Thyroid gland (tissue), 4 donors: ENCODE measurements at regions of chr2 and their contacts with region 1.

Region 1: DNA sequence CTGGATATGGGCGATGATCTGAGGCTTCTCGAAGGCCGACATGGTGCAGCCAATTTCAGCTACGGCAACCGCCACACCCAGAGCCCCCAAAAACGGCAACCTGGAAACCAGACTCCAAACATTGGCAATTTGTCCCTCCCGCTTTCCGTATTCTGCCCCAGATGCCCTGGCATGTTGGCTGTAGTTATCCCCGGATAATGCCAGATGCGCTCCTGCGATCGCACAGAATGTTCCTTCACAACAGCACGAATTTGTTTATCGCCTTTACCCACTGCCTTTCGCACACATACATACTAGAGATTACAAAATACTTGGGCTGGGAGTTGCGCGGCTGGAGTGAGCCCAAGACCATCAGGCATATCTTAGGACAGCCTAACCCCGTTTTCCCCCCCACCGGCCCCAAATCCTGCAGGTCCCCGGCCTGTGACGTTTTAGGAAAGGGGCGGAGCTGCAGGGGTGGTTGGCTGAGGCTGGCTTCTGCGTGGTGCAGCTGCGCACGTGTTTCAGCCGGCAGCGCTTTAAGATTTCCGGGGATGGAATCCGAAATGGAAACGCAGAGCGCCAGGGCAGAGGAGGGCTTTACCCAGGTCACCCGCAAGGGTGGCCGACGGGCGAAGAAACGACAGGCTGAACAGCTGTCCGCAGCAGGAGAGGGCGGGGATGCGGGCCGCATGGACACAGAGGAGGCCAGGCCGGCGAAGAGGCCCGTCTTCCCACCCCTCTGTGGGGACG is at the start of gene PNO1:
- DNase-seq: peak; percentile 96 to 97
- H3K4me3 ChIP-seq: peak within 1 kb of the TSS; percentile 59 to 87 (median 87)
- H3K27ac ChIP-seq: peak within 1 kb of the TSS; percentile 83 to 99 (median 93)
- H3K4me1 ChIP-seq: peaks cover 9 to 23% of the 10 kb centered on the region in 2 donors
- H3K27me3 ChIP-seq: no peaks in the 10 kb centered on the region
- CTCF ChIP-seq: peak in 1 of 6 experiments; percentile 13
- POLR2A ChIP-seq: peak in 1 of 2 donors; percentile 16
- total RNA-seq, gene PNO1: 13.2 to 23.2 (median 18.5) TPM

Region 2: GRCh38 chr2:68062680-68063387 is 94.7 kb before region 1 on chr2 and contains the start of gene C1D:
- intact Hi-C with region 1: loop called (anchors 5 kb)
- DNase-seq: peak; percentile 95
- H3K4me3 ChIP-seq: peak within 1 kb of the TSS; percentile 33 to 79 (median 62)
- H3K27ac ChIP-seq: peak within 1 kb of the TSS; percentile 70 to 79 (median 76)
- H3K4me1 ChIP-seq: peaks cover 12 to 24% of the 10 kb centered on the region in 2 donors
- H3K27me3 ChIP-seq: no peaks in the 10 kb centered on the region
- CTCF ChIP-seq: no peak
- POLR2A ChIP-seq: peak in 1 of 2 donors; percentile 74
- total RNA-seq, gene C1D: 40.6 to 67.9 (median 48.2) TPM

Region 3: DNA sequence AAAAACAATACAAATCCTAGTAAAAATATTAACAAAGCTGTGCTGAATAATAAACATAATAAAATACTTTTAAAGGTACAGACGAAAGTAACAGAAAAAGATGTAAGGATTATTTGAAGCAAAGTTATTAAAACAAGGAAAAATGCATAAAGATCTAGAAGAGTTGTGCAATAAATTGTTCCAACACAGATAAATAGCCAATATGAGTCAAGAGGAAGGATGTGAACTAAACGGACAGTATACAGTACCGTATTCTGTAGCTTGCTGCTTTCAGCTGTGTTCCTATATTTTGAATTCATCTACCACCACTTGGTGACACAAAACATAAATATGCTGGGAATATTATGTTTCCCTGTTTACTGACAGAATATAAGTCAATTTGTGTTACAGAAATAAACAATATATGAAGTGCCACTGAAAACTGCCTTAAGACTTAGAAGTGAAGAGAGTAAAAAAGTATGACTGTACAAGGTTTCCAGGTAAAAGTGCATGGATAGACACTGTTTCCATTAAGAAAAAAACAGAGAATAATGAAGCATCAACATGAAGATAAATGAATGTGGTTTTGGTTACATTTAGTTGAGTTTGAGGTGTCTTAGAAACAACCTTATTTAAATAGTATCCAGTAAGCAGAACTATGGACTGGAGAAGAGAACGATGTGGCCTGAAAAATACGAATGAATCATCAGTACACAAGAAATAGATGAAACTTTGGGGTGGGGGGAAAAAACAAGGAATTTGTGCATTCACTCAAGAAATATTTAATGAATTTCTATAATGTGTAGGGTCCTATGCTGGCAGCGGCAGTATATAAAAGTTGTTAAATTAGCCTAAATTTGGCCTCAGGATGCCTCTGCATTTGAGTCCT is 81.6 kb after region 1 on chr2:
- intact Hi-C with region 1: no loop called
- DNase-seq: no peak
- H3K4me3 ChIP-seq: no peak overlapping the region
- H3K27ac ChIP-seq: no peak overlapping the region
- H3K4me1 ChIP-seq: peaks cover 30 to 67% of the 10 kb centered on the region in 2 donors
- H3K27me3 ChIP-seq: no peaks in the 10 kb centered on the region
- CTCF ChIP-seq: no peak
- POLR2A ChIP-seq: no peak

Region 4: DNA sequence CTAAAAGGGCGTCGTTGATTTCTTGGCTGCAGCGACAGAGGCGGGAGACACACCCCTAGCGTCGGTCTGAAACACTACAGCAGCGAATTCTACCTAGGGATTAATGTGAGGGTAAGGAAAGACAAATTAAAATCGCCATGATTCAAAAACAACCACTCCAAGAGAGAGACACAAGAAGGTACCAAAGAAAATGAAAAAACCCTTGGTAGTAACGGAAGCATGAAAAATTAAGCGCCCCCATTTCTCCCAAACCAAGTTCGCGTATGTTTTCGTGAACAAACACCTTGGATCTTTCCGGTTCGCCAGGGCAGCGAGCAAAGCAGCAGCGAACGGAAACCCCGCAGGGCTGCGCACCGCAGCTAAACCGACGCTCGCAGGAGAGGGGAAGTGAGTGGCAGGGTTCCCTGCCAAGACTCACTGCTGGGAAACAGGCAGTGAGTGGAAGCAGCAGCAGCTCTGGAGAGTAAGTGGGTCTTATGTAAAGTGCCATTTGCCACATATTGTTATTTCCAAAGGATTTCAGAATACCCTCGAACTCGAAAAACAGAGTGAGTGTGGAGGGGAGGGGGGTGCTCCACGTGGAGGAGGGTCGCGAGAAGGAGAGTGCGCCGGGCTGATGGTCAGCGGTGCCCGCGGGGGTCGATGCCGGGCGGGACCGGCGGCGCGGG is 93.8 kb after region 1 on chr2:
- intact Hi-C with region 1: loop called (anchors 5 kb)
- DNase-seq: peak; percentile 76 to 81
- H3K4me3 ChIP-seq: peak overlapping the region; percentile 37 to 90 (median 72)
- H3K27ac ChIP-seq: peak overlapping the region; percentile 89 to 95 (median 95)
- H3K4me1 ChIP-seq: peaks cover 26 to 32% of the 10 kb centered on the region in 2 donors
- H3K27me3 ChIP-seq: no peaks in the 10 kb centered on the region
- CTCF ChIP-seq: peak; percentile 27 to 76 (median 72)
- POLR2A ChIP-seq: peak in 1 of 2 donors; percentile 51

Region 5: DNA sequence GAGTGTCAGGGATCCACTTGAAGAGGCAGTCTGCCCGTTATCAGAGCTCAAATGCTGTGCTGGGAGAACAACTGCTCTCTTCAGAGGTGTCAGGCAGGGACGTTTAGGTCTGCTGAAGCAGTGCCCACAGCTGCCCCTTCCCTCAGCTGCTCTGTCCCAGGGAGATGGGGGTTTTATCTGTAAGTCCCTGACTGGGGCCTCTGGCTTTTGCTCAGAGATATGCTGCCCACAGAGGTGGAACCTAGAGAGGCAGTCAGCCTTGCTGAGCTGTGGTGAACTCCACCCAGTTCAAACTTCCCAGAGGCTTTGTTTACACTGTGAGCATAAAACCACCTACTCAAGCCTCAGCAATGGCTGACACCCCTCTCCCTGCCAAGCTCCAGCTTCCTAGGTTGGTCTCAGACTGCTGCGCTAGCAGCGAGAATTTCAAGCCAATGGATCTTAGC is 245.7 kb after region 1 on chr2:
- intact Hi-C with region 1: no loop called
- DNase-seq: peak in 1 of 2 donors; percentile 21
- H3K4me3 ChIP-seq: no peak overlapping the region
- H3K27ac ChIP-seq: no peak overlapping the region
- H3K4me1 ChIP-seq: no peaks in the 10 kb centered on the region
- H3K27me3 ChIP-seq: no peaks in the 10 kb centered on the region
- CTCF ChIP-seq: no peak
- POLR2A ChIP-seq: no peak